ENCODE measurements at regions of chr12 and their contacts with region 1.

Region 1: GRCh38 chr12:117002051-117002817 is 91.5 kb downstream of the FBXW8 start:
- DNase-seq: no peak
- H3K4me3 ChIP-seq: no peak overlapping the region
- H3K27ac ChIP-seq: no peak overlapping the region
- H3K4me1 ChIP-seq: no peaks in the 10 kb centered on the region
- H3K27me3 ChIP-seq: no peaks in the 10 kb centered on the region
- CTCF ChIP-seq: no peak

Region 2: GRCh38 chr12:116969615-116970580 is 32.3 kb before region 1 on chr12:
- intact Hi-C with region 1: no loop called
- DNase-seq: no peak
- H3K4me3 ChIP-seq: no peak overlapping the region
- H3K27ac ChIP-seq: no peak overlapping the region
- H3K4me1 ChIP-seq: no peaks in the 10 kb centered on the region
- H3K27me3 ChIP-seq: no peaks in the 10 kb centered on the region
- CTCF ChIP-seq: no peak

Region 3: GRCh38 chr12:117427211-117427610 is 425.0 kb after region 1 on chr12:
- intact Hi-C with region 1: loop called (anchors 5 kb)
- DNase-seq: no peak
- H3K4me3 ChIP-seq: no peak overlapping the region
- H3K27ac ChIP-seq: no peak overlapping the region
- H3K4me1 ChIP-seq: no peaks in the 10 kb centered on the region
- H3K27me3 ChIP-seq: no peaks in the 10 kb centered on the region
- CTCF ChIP-seq: no peak